ENCODE measurements at regions of chr18 and their contacts with region 1.

Region 1: DNA sequence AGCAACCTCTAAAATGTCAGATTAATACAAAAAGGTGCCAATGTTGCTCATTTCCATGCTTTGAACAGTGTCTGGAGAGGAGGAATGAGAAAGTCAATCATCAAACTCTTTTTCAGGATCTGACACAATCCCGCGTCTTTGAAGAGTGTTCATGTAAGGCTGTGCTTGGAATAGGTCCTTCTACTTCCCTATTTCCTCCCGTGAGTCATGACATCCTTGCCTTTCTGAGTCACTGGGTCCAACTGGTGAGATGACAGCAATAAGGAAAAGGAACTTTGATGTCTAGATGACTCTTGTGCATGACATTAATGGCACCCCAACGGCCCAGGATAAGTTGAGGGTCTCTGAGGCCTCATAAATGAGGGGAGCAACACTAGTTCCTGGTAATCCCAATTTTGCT is 109.0 kb upstream of the CELF4 start:
- DNase-seq: no peak
- H3K4me3 ChIP-seq: no peak overlapping the region
- H3K27ac ChIP-seq: no peak overlapping the region
- H3K4me1 ChIP-seq: no peaks in the 10 kb centered on the region
- H3K27me3 ChIP-seq: no peaks in the 10 kb centered on the region
- CTCF ChIP-seq: no peak
- POLR2A ChIP-seq: no peak

Region 2: GRCh38 chr18:36481201-36481657 is 1193.3 kb before region 1 on chr18:
- intact Hi-C with region 1: no loop called
- DNase-seq: no peak
- H3K4me3 ChIP-seq: no peak overlapping the region
- H3K27ac ChIP-seq: no peak overlapping the region
- H3K4me1 ChIP-seq: no peaks in the 10 kb centered on the region
- H3K27me3 ChIP-seq: no peaks in the 10 kb centered on the region
- CTCF ChIP-seq: no peak
- POLR2A ChIP-seq: no peak

Region 3: GRCh38 chr18:37243741-37244140 is 430.8 kb before region 1 on chr18:
- intact Hi-C with region 1: no loop called
- DNase-seq: no peak
- H3K4me3 ChIP-seq: no peak overlapping the region
- H3K27ac ChIP-seq: no peak overlapping the region
- H3K4me1 ChIP-seq: no peaks in the 10 kb centered on the region
- H3K27me3 ChIP-seq: no peaks in the 10 kb centered on the region
- CTCF ChIP-seq: no peak
- POLR2A ChIP-seq: no peak

Region 4: GRCh38 chr18:37636831-37637477 is 37.6 kb before region 1 on chr18:
- intact Hi-C with region 1: no loop called
- DNase-seq: no peak
- H3K4me3 ChIP-seq: no peak overlapping the region
- H3K27ac ChIP-seq: no peak overlapping the region
- H3K4me1 ChIP-seq: no peaks in the 10 kb centered on the region
- H3K27me3 ChIP-seq: no peaks in the 10 kb centered on the region
- CTCF ChIP-seq: no peak
- POLR2A ChIP-seq: no peak

Region 5: DNA sequence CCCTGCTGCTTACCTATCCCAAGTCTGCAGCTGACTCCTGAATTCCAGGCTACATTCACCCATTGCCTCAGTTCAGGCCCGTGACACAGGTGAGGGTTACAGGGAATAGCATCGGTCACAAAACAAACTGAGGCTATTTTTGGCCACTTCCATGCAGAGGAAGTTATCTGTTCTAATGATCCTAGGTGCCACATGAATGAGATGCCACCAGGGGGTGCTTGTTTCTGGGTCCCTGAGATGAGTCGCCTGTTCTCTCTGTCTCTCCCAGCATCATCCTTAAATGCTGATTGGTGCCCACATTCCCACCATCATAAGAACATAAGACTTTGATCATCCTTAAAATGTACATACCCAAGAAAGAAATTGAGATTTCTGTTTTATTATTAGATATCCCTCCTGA is 10.0 kb after region 1 on chr18:
- intact Hi-C with region 1: loop called (anchors 1 kb)
- DNase-seq: no peak
- H3K4me3 ChIP-seq: no peak overlapping the region
- H3K27ac ChIP-seq: no peak overlapping the region
- H3K4me1 ChIP-seq: no peaks in the 10 kb centered on the region
- H3K27me3 ChIP-seq: no peaks in the 10 kb centered on the region
- CTCF ChIP-seq: no peak
- POLR2A ChIP-seq: no peak

Measured in breast epithelium (tissue), 4 donors.